ENCODE measurements at regions of chr11 and their contacts with region 1.

Region 1: GRCh38 chr11:75432911-75433321 is at the start of gene KLHL35:
- DNase-seq: no peak
- H3K4me3 ChIP-seq: no peak within 1 kb of the TSS
- H3K27ac ChIP-seq: no peak within 1 kb of the TSS
- H3K4me1 ChIP-seq: peaks cover 12% of the 10 kb centered on the region
- H3K27me3 ChIP-seq: peaks cover 44% of the 10 kb centered on the region
- CTCF ChIP-seq: no peak
- total RNA-seq, gene KLHL35: 0.88 and 1.1 TPM in 2 replicates

Region 2: GRCh38 chr11:75400146-75400865 is 32.6 kb before region 1 on chr11:
- CTCF ChIA-PET with region 1: no interaction called
- POLR2A ChIA-PET with region 1: interaction called, 15 read pairs
- intact Hi-C with region 1: no loop called
- DNase-seq: peak; percentile 34
- H3K4me3 ChIP-seq: peak overlapping the region; percentile 70
- H3K27ac ChIP-seq: peak overlapping the region; percentile 94
- H3K4me1 ChIP-seq: peaks cover 25% of the 10 kb centered on the region
- H3K27me3 ChIP-seq: no peaks in the 10 kb centered on the region
- CTCF ChIP-seq: no peak

Region 3: DNA sequence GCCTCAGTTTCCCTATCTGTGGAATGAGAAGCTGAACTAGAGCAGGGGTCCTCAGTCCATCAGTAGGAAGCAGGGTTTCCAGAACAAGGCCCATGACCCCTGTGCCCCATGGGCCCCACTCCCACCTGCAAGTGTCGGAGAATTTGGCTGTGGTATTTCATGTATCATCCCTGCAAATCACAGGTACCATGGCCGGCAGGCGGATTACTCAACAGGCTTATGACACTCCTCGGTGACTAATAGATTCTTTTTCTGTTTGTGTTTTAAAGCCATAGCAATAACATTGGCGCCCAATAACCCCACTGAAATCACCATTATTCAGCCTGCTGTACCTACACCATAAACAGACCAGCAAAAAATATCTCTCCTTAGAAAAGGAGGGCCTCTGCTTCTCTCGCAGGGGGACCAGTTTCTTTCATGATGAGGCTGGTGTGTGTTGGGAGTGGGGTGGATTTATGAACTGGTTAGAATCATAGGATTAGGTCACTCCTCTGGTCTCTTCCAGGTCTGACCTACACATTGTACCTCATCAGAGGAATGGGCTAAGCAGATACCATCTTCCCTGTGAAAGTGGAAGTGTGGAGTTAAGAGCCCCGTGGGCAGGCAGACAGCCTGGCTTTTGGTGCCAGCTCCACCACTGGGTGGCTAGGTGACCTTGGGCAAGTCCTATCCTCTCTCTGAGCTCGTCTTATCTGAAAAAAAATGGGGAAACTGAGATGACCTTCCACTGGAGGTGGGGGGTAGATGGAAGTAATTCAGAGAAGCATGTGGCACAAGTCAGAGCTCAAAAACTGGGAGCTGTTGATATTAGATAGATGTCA is 833.6 kb after region 1 on chr11:
- CTCF ChIA-PET with region 1: no interaction called
- POLR2A ChIA-PET with region 1: no interaction called
- intact Hi-C with region 1: no loop called
- DNase-seq: no peak
- H3K4me3 ChIP-seq: no peak overlapping the region
- H3K27ac ChIP-seq: no peak overlapping the region
- H3K4me1 ChIP-seq: no peaks in the 10 kb centered on the region
- H3K27me3 ChIP-seq: no peaks in the 10 kb centered on the region
- CTCF ChIP-seq: no peak

Measured in A673 (cell line).